Breast epithelium (tissue), 4 donors: ENCODE measurements at regions of chr14 and their contacts with region 1.

Region 1: DNA sequence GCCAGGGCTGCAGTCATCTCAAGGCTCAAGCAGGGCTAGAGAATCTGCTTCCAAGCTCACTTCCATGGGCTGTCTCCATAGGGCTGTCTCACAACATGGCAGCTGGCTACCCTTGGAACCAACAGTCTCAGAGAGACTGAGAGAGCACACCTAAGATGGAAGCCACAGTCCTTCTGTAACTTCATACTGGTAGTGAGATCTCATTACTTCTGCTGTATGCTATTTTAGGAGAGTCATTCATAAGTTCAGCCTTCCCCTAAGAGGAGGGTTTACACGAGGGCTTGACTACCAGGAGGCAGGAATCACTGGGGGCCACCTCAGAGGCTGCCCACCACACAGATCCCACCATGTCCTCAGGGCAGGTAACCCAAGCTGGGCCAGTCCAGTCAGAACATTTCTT is 29.7 kb downstream of the ERH start:
- DNase-seq: no peak
- H3K4me3 ChIP-seq: no peak overlapping the region
- H3K27ac ChIP-seq: no peak overlapping the region
- H3K4me1 ChIP-seq: no peaks in the 10 kb centered on the region
- H3K27me3 ChIP-seq: no peaks in the 10 kb centered on the region
- CTCF ChIP-seq: no peak
- POLR2A ChIP-seq: no peak

Region 2: DNA sequence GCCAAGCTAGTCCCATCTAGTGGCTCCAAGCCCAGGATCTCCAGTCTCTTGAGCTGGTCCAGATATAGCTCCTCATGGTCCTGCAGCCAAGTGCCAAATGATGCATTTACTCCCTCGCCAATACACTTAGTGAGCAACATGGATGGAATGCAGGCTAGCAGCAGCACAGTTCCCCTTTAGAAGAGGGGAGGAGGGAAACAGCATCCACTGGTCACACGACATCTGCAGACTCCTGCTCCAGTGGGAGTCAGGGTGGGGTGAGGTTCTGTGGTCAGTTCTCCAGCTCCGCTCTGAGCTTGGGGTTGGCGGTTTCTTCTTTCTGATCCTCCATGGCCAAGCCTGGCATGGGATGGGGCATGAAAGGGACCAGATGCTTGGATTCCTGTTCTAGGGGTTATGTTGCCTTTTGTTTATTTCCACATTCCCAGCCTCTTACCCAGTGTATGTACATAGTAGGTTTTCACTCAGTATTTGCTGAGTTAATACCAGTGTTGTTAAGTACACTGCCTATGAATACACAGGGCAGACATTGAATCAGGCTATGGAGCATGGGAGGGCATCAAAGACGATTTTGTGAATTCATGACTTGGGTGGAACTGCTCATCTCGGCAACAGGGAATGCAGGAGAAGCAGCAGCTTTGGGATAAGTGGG is 51.2 kb before region 1 on chr14:
- intact Hi-C with region 1: loop called (anchors 5 kb)
- DNase-seq: peak in 1 of 2 donors; percentile 39
- H3K4me3 ChIP-seq: no peak overlapping the region
- H3K27ac ChIP-seq: peak overlapping the region; percentile 67 to 77
- H3K4me1 ChIP-seq: no peaks in the 10 kb centered on the region
- H3K27me3 ChIP-seq: no peaks in the 10 kb centered on the region
- CTCF ChIP-seq: no peak
- POLR2A ChIP-seq: no peak

Region 3: GRCh38 chr14:71166180-71166790 is 1797.9 kb after region 1 on chr14:
- intact Hi-C with region 1: no loop called
- DNase-seq: peak in 1 of 2 donors; percentile 26
- H3K4me3 ChIP-seq: no peak overlapping the region
- H3K27ac ChIP-seq: no peak overlapping the region
- H3K4me1 ChIP-seq: no peaks in the 10 kb centered on the region
- H3K27me3 ChIP-seq: no peaks in the 10 kb centered on the region
- CTCF ChIP-seq: peak in 1 of 3 donors; percentile 48
- POLR2A ChIP-seq: no peak